Uterus (tissue), 4 donors: ENCODE measurements at regions of chr22 and their contacts with region 1.

Region 1: GRCh38 chr22:21952586-21953571 is at the start of gene PPM1F:
- DNase-seq: peak; percentile 82 to 90
- H3K4me3 ChIP-seq: peak within 1 kb of the TSS; percentile 72 to 95
- H3K27ac ChIP-seq: peak within 1 kb of the TSS; percentile 74 to 78
- H3K4me1 ChIP-seq: peaks cover 0 to 3% of the 10 kb centered on the region in 2 donors
- H3K27me3 ChIP-seq: no peaks in the 10 kb centered on the region
- CTCF ChIP-seq: peak; percentile 86 to 100 (median 98)
- POLR2A ChIP-seq: no peak
- total RNA-seq, gene PPM1F: 16.2 to 67.3 (median 48.8) TPM

Region 2: DNA sequence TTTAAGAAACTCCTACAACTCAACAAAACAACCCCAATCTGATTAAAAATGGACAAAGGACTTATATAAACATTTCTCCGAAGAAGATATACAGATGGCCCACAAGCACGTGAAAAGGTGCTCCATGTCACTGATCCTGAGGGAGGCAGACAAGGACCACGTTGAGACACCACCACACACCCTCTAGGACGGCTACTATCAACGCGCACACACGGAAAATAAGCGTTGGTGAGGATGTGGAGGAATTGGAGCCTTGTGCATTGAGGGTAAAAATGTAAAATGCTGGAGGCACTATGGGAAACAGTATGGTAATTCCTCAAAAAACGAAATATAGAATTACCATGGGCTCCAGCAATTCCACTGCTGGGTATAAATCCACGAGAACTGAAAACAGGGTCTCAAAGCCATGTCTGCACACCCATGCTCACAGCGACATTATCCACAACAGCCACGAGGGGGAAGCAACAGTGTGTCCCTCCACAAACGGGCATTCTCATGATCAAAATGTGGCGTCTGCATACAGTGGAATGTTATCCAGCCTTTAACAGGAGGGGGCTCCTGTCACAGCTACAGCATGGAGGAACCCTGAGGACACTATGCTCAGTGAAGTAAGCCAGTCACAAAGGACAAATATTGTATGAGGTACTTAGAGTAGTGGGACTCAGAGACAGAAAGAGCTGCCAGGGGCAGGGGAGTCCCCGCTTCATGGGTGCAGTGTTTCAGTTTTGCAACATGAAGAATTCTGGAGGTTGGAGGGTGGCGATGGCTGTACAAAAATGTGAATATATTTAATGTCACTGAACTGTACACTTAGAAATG is 239.8 kb before region 1 on chr22:
- intact Hi-C with region 1: loop called (anchors 5 kb)
- DNase-seq: peak; percentile 67
- H3K4me3 ChIP-seq: no peak overlapping the region
- H3K27ac ChIP-seq: no peak overlapping the region
- H3K4me1 ChIP-seq: no peaks in the 10 kb centered on the region
- H3K27me3 ChIP-seq: no peaks in the 10 kb centered on the region
- CTCF ChIP-seq: peak; percentile 69 to 79 (median 74)
- POLR2A ChIP-seq: no peak

Region 3: DNA sequence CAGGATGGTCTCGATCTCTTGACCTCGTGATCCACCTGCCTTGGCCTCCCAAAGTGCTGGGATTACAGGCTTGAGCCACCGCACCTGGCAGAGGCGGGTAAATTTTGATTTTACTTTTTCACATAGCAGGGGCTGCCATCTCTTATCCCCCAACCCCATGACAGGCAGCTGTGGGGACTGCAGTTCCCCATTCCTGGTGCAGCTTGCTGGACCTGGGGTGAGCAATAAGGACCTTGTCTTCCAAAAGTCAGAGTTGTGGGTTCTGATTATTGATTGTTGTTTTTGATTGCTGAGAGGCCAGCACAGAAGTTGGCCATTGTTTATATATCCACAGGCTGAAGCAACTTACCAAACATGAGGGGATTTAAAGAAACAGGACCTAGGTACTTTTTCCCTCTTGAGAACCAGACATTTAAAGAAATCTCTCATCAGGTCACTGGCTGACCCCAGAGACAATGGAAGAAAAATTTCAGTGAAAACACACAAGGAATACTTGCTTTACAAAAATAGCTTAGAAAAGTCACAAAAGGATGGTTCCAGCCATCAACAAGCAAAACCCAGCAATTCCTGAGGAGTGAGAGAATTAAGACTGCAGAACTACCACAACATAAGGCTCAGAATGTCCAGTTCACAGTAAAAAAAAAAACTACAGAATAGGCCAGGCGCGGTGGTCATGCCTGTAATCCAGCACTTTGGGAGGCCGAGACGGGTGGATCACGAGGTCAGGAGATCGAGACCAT is 63.5 kb before region 1 on chr22:
- intact Hi-C with region 1: no loop called
- DNase-seq: no peak
- H3K4me3 ChIP-seq: no peak overlapping the region
- H3K27ac ChIP-seq: no peak overlapping the region
- H3K4me1 ChIP-seq: no peaks in the 10 kb centered on the region
- H3K27me3 ChIP-seq: no peaks in the 10 kb centered on the region
- CTCF ChIP-seq: no peak
- POLR2A ChIP-seq: no peak

Region 4: DNA sequence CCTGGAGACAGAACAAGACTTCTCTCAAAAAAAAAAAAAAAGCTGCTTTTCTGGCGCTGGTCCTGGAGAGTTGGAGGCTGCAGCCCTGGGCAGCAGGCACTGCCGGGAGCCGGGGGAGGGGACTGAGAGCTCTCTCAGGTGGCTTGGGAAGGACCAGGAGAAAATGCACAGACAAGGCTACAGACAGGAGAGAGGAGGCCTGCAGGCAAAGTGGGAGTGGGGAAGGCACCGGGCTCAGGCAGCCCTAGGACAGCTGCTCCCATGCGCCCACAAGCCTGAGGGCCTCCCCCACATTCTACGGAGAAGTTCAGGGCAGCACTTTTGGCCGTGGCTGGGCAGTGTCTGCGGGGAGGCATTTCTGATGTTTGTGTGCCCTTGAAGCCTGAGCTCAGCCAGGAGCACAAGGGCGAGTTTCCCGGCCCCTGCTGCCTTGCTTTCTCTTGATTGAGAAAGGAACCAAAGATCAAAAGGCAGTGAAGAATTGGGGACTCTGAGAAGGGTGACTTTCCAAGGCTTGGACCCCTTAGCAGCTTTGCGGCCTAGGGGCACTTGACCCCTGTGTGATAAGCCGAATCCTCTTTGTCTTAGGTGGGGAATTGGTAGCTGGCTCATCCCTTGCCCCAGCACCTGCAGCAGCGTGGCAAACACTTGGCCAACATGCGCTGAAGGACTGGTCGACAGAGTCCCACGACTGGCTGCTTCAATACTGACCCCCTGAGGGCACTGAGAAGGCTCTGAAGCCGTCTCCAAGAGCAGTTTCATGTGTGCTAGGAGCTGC is 35.5 kb before region 1 on chr22:
- intact Hi-C with region 1: no loop called
- DNase-seq: no peak
- H3K4me3 ChIP-seq: no peak overlapping the region
- H3K27ac ChIP-seq: peak overlapping the region; percentile 14 to 34
- H3K4me1 ChIP-seq: peaks cover 0 to 12% of the 10 kb centered on the region in 2 donors
- H3K27me3 ChIP-seq: no peaks in the 10 kb centered on the region
- CTCF ChIP-seq: no peak
- POLR2A ChIP-seq: no peak

Region 5: DNA sequence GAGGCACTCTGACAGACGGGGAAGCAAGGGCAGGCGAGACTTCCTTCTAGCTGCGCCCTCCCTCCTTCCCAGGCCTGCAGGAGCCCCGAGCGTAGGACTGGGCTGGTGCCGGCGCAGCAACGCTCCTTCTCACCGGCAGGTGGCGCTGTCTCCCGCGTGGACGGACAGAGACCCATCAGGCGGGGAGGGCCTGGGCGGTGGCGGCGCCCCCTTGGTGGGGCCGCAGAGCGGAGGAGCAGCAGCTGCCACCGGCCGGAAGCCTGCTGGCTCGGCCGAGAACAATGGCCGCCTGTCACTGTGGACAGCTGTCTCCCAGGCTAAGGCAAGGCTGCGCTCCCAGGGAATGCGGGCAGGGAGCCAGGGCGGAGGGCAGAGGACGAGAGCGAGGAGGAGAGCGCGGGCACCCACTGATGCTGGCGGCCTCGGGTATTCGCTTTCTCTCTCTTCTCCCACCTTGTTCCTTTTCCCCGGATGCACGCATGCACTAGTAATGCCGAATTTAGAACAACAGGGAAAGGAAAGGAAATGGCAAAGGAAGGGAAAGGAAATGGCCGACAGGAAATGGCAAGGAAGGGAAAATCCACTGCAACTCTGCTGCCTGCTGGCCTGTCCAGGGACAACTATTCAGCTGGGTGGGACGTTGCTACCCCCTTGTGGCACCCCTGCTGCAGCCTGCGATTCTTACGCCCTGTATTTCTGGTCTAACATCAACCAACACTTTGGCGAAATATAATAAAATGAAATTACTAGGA is 14.6 kb before region 1 on chr22:
- intact Hi-C with region 1: loop called (anchors 2 kb)
- DNase-seq: peak; percentile 93 to 97
- H3K4me3 ChIP-seq: peak overlapping the region; percentile 48 to 63
- H3K27ac ChIP-seq: peak overlapping the region; percentile 93 to 97
- H3K4me1 ChIP-seq: peaks cover 17 to 22% of the 10 kb centered on the region in 2 donors
- H3K27me3 ChIP-seq: no peaks in the 10 kb centered on the region
- CTCF ChIP-seq: peak; percentile 95 to 100 (median 98)
- POLR2A ChIP-seq: peak in 1 of 2 donors; percentile 65